ENCODE measurements at regions of chr5 and their contacts with region 1.

Region 1: DNA sequence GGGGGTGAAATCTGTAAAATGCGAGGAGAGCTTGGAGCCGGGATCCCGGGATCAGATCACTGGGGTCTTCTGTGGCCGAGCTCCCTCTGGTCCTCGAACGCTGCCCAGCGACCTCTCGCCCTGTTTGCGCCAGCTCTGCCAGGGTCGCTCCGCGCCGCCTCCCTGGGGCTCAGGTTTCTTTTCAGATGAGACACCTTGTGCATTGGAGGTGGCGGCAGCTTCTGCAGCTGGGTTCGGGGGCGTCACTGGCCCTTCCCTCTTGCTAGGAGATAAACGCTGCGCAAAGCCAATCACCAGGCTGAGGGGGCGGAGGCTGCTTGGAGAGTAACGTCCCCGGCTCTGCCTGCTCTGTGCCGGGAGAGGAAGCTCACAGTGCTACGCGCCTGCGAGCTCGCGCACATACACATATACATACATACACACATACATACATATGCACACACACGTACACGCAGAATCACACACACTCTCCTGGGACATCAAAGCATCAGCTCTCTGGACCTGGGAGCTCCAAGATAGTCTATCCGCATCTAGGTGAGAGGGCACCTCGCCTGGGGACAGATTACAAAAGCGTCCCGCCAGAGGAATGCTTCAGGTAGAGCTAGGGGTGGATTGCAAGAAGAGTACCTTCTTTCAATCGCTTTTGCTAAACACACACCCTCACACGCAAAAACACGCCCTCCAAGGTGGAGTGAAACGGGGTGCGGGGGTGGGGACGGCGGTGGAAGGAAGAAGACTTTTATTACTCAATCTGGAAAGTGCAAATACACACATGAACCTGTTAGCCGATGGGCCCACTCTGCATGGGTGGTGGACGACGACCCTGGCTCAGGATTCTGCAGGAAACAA is at the start of gene ST8SIA4:
- DNase-seq: peak; percentile 95
- ATAC-seq: peak; percentile 75
- H3K4me3 ChIP-seq: peak within 1 kb of the TSS; percentile 82 to 100 (median 97)
- H3K4me3 Mint-ChIP-seq: peak within 1 kb of the TSS; percentile 89
- H3K27ac ChIP-seq: peak within 1 kb of the TSS; percentile 90 to 95
- H3K27ac Mint-ChIP-seq: peak within 1 kb of the TSS; percentile 96
- H3K4me1 ChIP-seq: peaks cover 27 to 38% of the 10 kb centered on the region in 2 donors
- H3K4me1 Mint-ChIP-seq: peaks cover 46% of the 10 kb centered on the region
- H3K27me3 ChIP-seq: no peaks in the 10 kb centered on the region
- H3K27me3 Mint-ChIP-seq: no peaks in the 10 kb centered on the region
- CTCF ChIP-seq: no peak
- total RNA-seq, gene ST8SIA4: 42.6 and 49.3 TPM in 2 replicates

Region 2: DNA sequence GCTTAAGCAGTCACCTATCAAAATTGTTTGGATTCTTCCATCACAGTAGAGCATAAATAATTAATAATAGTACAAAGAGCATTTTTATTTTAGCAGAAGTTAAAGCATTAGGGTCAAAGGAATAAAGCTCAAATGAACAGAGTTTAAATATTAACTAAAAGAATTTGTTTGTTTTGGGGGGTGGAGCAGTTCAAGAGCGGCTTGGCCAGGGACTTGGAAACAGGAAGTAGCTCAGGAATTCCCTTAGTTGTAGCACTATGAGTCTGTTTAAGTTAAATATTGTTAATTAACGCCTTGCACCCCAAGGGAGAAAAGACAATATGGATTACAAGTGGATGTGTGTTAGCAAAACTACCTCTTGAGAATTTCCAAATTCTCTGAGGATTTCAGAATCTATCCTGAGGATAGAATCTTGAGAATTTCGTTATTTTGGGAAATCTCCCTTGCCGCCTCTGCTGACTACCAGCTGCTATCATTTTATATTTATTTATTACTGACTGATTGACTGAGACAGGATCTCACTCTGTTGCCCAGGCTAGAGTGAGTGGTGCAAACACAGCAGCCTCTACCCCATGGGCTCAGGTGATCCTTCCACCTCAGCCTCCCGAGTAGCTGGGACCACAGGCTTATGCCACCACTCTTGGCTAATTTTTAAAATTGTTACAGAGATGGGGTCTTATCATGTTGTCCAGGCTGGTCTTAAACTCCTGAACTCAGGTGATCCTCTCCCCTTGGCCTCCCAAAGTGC is 1877.8 kb before region 1 on chr5:
- CTCF ChIA-PET with region 1: no interaction called
- POLR2A ChIA-PET with region 1: interaction called, 3 read pairs
- intact Hi-C with region 1: loop called (anchors 5 kb)
- DNase-seq: no peak
- ATAC-seq: no peak
- H3K4me3 ChIP-seq: no peak overlapping the region
- H3K4me3 Mint-ChIP-seq: no peak overlapping the region
- H3K27ac ChIP-seq: peak overlapping the region in 1 of 2 donors; percentile 75
- H3K27ac Mint-ChIP-seq: peak overlapping the region; percentile 37
- H3K4me1 ChIP-seq: peaks cover 43 to 46% of the 10 kb centered on the region in 2 donors
- H3K4me1 Mint-ChIP-seq: peaks cover 45% of the 10 kb centered on the region
- H3K27me3 ChIP-seq: no peaks in the 10 kb centered on the region
- H3K27me3 Mint-ChIP-seq: no peaks in the 10 kb centered on the region
- CTCF ChIP-seq: no peak

Region 3: DNA sequence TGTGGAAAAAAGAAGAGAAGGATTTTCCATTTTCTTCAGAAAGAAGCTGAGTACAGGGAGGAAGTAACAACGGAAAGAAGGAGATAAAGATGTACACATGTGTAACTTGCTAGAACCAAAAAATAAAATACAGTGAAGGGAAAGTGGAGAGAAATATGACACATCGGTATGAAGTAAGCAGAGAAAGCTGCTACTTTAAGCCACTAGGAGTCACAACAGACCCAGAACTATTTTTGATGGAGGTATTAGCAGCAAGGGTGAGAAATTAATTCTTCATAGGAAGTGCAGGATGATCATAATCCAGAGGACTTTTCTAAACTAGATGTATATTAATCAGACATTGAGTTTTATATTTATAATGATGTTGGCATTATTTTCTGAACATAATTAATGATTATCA is 279.5 kb before region 1 on chr5:
- CTCF ChIA-PET with region 1: interaction called, 4 read pairs
- POLR2A ChIA-PET with region 1: no interaction called
- intact Hi-C with region 1: loop called (anchors 5 kb)
- DNase-seq: peak; percentile 47
- ATAC-seq: peak; percentile 45
- H3K4me3 ChIP-seq: no peak overlapping the region
- H3K4me3 Mint-ChIP-seq: no peak overlapping the region
- H3K27ac ChIP-seq: no peak overlapping the region
- H3K27ac Mint-ChIP-seq: no peak overlapping the region
- H3K4me1 ChIP-seq: no peaks in the 10 kb centered on the region
- H3K4me1 Mint-ChIP-seq: no peaks in the 10 kb centered on the region
- H3K27me3 ChIP-seq: no peaks in the 10 kb centered on the region
- H3K27me3 Mint-ChIP-seq: peaks cover 3% of the 10 kb centered on the region
- CTCF ChIP-seq: peak; percentile 78

Region 4: DNA sequence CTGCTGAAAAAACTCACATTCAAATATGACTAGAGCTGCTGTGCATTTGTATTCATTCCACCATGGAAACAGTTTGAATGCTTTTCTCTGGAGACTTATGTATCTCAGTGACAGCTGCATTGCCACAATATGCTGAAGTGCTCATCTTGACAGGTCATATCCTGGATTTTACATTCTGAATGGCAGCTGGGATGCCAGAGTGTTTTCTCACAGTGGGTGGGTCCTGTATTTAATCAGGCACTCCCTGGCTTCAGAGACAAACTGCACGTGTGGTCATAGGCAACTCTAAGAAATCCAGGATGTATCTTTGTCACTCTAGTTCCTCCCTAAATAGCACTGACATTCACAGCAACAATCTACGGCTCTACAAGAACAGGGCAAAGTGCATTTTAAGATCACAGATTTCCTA is 75.8 kb before region 1 on chr5:
- CTCF ChIA-PET with region 1: interaction called, 13 read pairs
- POLR2A ChIA-PET with region 1: interaction called, 3 read pairs
- intact Hi-C with region 1: loop called (anchors 1 kb)
- DNase-seq: no peak
- ATAC-seq: peak; percentile 10
- H3K4me3 ChIP-seq: no peak overlapping the region
- H3K4me3 Mint-ChIP-seq: peak overlapping the region; percentile 72
- H3K27ac ChIP-seq: peak overlapping the region; percentile 29 to 65
- H3K27ac Mint-ChIP-seq: peak overlapping the region; percentile 85
- H3K4me1 ChIP-seq: peaks cover 18 to 23% of the 10 kb centered on the region in 2 donors
- H3K4me1 Mint-ChIP-seq: peaks cover 42% of the 10 kb centered on the region
- H3K27me3 ChIP-seq: no peaks in the 10 kb centered on the region
- H3K27me3 Mint-ChIP-seq: no peaks in the 10 kb centered on the region
- CTCF ChIP-seq: no peak

Region 5: GRCh38 chr5:100852988-100853449 is 50.2 kb before region 1 on chr5:
- CTCF ChIA-PET with region 1: interaction called, 13 read pairs
- POLR2A ChIA-PET with region 1: interaction called, 4 read pairs
- intact Hi-C with region 1: loop called (anchors 1 kb)
- DNase-seq: peak; percentile 82
- ATAC-seq: peak; percentile 95
- H3K4me3 ChIP-seq: peak overlapping the region in 3 of 5 experiments; percentile 3 to 49 (median 16)
- H3K4me3 Mint-ChIP-seq: peak overlapping the region; percentile 68
- H3K27ac ChIP-seq: peak overlapping the region; percentile 51 to 84
- H3K27ac Mint-ChIP-seq: peak overlapping the region; percentile 76
- H3K4me1 ChIP-seq: peaks cover 37 to 51% of the 10 kb centered on the region in 2 donors
- H3K4me1 Mint-ChIP-seq: peaks cover 41% of the 10 kb centered on the region
- H3K27me3 ChIP-seq: no peaks in the 10 kb centered on the region
- H3K27me3 Mint-ChIP-seq: no peaks in the 10 kb centered on the region
- CTCF ChIP-seq: no peak

Region 6: DNA sequence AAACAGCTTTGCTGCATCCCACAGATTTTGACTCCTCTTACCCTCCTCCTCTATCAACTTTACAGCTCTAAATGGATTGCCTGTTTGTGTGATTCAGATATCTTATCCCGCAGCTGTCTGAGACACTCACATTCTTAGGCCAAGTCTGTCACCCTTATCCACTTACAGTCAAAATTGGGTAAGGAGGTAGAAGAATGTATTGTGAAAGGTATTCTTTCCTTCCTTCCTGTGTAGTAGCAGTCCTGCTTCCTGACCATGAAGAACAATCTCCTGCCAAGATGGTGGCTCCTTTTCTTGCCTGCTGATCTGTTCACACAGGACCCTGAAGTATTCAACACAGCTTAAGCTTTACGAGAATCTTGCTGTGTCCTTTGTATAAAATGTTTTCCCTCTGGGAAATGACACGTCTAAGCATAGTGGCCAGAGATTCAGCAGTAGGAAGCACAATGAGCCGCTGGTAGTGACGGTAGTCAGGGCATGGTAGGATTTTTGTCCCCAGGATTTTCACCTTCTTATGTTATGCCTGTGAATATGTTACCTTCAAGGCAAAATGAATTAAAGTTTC is 67.5 kb after region 1 on chr5:
- CTCF ChIA-PET with region 1: no interaction called
- POLR2A ChIA-PET with region 1: no interaction called
- intact Hi-C with region 1: no loop called
- DNase-seq: no peak
- ATAC-seq: no peak
- H3K4me3 ChIP-seq: no peak overlapping the region
- H3K4me3 Mint-ChIP-seq: no peak overlapping the region
- H3K27ac ChIP-seq: no peak overlapping the region
- H3K27ac Mint-ChIP-seq: no peak overlapping the region
- H3K4me1 ChIP-seq: no peaks in the 10 kb centered on the region
- H3K4me1 Mint-ChIP-seq: no peaks in the 10 kb centered on the region
- H3K27me3 ChIP-seq: peaks cover 0 to 3% (median 0%) of the 10 kb centered on the region in 4 experiments
- H3K27me3 Mint-ChIP-seq: peaks cover 23% of the 10 kb centered on the region
- CTCF ChIP-seq: no peak